Panc1 (cell line): ENCODE measurements at regions of chr5 and their contacts with region 1.

Region 1: GRCh38 chr5:174951146-174951780 is 226.9 kb downstream of the MSX2 start:
- DNase-seq: peak; percentile 72
- ATAC-seq: peak; percentile 98
- H3K4me3 ChIP-seq: no peak overlapping the region
- H3K27ac ChIP-seq: no peak overlapping the region
- H3K4me1 ChIP-seq: no peaks in the 10 kb centered on the region
- H3K27me3 ChIP-seq: peaks cover 3% of the 10 kb centered on the region; the same call in 1 of the 2 replicates
- CTCF ChIP-seq: peak; percentile 86

Region 2: DNA sequence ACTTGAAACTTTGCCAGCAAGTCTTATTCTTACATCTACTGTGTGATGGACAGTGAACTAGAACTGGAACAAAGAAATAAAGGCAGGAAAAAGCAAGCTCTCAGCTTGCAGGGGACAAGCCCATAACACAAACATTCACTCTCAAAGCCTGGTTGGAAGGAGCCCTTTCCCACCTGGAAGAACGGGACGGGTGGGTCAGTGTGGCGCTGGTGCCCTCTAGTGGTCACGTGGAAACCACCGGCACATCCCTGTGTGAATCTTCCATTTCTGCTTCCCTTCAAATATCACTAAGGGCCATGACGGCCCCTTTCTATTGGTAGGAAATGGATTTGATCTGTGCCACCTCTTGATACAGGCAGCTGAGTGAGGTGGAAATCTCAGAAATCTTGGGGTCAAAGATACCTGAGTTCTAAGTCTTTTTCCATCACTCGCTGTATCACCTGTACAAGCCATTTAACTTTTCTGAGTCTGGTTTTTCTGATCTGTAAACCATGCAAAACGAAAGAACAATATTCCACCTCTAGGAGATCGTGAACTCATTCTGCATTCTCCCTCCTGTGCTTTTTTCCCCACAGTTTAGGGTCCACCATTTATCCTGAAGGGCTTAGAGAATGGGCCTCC is 15.3 kb before region 1 on chr5:
- CTCF ChIA-PET with region 1: no interaction called
- POLR2A ChIA-PET with region 1: no interaction called
- in situ Hi-C with region 1: no loop called
- intact Hi-C with region 1: no loop called
- DNase-seq: peak; percentile 51
- ATAC-seq: peak; percentile 92
- H3K4me3 ChIP-seq: no peak overlapping the region
- H3K27ac ChIP-seq: no peak overlapping the region
- H3K4me1 ChIP-seq: no peaks in the 10 kb centered on the region
- H3K27me3 ChIP-seq: peaks cover 2% of the 10 kb centered on the region; the same call in 1 of the 2 replicates
- CTCF ChIP-seq: peak; percentile 96

Region 3: DNA sequence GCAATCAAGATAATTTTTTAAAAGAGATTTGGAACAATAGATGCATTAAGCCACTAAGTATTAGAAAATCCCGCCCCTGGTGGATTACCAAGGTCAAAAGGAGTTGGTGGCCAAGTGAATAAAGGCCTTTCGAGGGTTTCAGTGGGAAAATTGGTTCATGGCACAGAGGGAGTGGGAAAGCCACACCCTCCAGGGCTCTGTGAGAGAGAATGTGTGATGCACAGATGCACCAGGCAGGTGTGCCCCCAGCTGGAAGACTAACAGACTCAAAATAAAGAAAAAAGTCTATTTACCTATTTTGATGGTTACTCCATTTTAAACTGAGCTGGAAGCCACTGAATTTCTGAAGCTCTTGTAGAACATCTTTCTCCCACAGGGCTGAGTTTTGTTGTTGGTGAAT is 214.8 kb after region 1 on chr5:
- CTCF ChIA-PET with region 1: no interaction called
- POLR2A ChIA-PET with region 1: no interaction called
- in situ Hi-C with region 1: no loop called
- intact Hi-C with region 1: no loop called
- DNase-seq: no peak
- ATAC-seq: no peak
- H3K4me3 ChIP-seq: no peak overlapping the region
- H3K27ac ChIP-seq: no peak overlapping the region
- H3K4me1 ChIP-seq: no peaks in the 10 kb centered on the region
- H3K27me3 ChIP-seq: peaks cover 2% of the 10 kb centered on the region; the same call in 1 of the 2 replicates
- CTCF ChIP-seq: no peak

Region 4: GRCh38 chr5:175235251-175235960 is 284.1 kb after region 1 on chr5:
- CTCF ChIA-PET with region 1: no interaction called
- POLR2A ChIA-PET with region 1: interaction called, 13 read pairs
- in situ Hi-C with region 1: no loop called
- intact Hi-C with region 1: no loop called
- DNase-seq: no peak
- ATAC-seq: no peak
- H3K4me3 ChIP-seq: no peak overlapping the region
- H3K27ac ChIP-seq: no peak overlapping the region
- H3K4me1 ChIP-seq: no peaks in the 10 kb centered on the region
- H3K27me3 ChIP-seq: no peaks in the 10 kb centered on the region
- CTCF ChIP-seq: no peak

Region 5: DNA sequence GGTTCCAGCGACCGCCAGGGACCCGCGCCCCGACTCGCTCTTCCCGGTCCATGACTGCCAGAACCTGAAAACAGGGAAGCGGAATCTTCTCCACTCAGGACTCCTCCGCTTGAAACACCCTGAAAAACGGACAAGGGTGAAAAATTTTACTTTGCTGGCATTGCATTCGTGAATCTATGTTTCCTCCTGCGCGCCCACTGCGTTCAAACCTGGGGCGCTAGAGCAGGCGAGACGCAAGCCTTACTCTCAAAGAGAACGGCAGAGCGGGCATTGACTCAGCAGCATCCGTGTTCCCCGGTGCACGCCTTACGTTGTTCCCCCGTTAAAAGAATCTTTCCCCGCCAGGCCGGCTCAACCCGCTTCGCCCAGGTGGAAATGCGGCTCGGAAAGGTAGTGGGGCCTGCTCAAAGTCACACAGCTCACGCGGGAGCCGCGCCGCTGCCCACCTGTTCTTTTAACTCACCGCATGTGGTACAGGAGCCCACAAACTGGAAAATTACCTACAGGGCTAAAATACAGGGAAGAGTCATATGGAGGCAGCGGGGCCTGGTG is 493.7 kb after region 1 on chr5:
- CTCF ChIA-PET with region 1: interaction called, 3 read pairs
- POLR2A ChIA-PET with region 1: no interaction called
- in situ Hi-C with region 1: no loop called
- intact Hi-C with region 1: loop called (anchors 1 kb)
- DNase-seq: no peak
- ATAC-seq: no peak
- H3K4me3 ChIP-seq: peak overlapping the region; percentile 34 to 43; a peak in 3 of 4 replicates
- H3K27ac ChIP-seq: no peak overlapping the region
- H3K4me1 ChIP-seq: no peaks in the 10 kb centered on the region; the same call in 1 of the 2 replicates
- H3K27me3 ChIP-seq: peaks cover 10% of the 10 kb centered on the region
- CTCF ChIP-seq: no peak; the same call in none of the 2 replicates

Region 6: DNA sequence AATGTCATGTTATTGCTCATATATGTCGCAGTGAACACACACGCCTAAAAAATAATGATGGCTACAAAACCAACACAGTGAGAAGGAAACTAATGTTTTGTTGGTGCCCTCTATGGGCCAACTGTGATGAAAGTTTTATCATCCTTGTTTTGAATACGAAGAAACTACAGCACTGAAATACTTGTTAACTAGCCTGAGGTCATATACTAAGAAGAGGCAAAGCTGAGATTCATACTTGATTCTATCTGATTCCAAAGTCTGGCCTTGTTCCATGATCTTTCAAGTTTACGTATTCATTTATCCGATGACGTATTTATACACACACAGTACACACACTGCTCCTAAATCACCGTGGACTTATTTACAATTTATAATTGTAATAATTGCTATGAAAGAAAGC is 508.9 kb after region 1 on chr5:
- CTCF ChIA-PET with region 1: interaction called, 5 read pairs
- POLR2A ChIA-PET with region 1: no interaction called
- in situ Hi-C with region 1: no loop called
- intact Hi-C with region 1: loop called (anchors 1 kb)
- DNase-seq: no peak
- ATAC-seq: no peak
- H3K4me3 ChIP-seq: no peak overlapping the region
- H3K27ac ChIP-seq: no peak overlapping the region
- H3K4me1 ChIP-seq: no peaks in the 10 kb centered on the region
- H3K27me3 ChIP-seq: 0 out of 2 replicates have a peak, but pooled peaks cover 3% of the 10 kb centered on the region
- CTCF ChIP-seq: peak; percentile 70; the same call in 1 of the 2 replicates

Region 7: DNA sequence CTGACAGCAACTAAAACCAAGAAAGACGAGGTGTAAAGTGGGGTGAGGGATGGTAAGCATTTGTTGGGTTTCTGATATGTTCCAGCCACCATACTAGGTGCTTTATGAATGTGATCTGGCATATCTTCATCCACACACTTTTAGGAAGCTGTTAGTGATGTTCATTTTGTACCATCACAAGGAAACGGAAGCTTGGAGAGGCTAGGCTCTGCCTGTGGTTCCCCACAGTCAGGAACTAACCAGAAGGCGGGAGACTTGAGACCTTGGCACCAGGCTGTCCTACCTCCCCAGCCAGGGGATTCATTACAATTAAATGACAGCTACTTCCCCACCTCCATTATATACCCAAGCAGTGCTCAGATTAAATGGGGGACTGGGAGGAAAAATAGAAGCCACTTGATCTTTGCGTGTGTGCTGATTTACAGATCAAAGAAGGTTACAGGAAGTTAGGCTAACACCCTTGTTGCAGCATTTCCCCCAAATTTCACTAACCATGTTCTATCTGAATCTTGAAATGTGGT is 570.1 kb after region 1 on chr5:
- CTCF ChIA-PET with region 1: no interaction called
- POLR2A ChIA-PET with region 1: no interaction called
- in situ Hi-C with region 1: no loop called
- intact Hi-C with region 1: no loop called
- DNase-seq: no peak
- ATAC-seq: no peak
- H3K4me3 ChIP-seq: no peak overlapping the region
- H3K27ac ChIP-seq: no peak overlapping the region
- H3K4me1 ChIP-seq: no peaks in the 10 kb centered on the region
- H3K27me3 ChIP-seq: no peaks in the 10 kb centered on the region
- CTCF ChIP-seq: no peak